ENCODE measurements at regions of chr5 and their contacts with region 1.

Region 1: GRCh38 chr5:38494763-38495162 is 61.7 kb downstream of the LIFR start:
- DNase-seq: no peak
- H3K4me3 ChIP-seq: no peak overlapping the region
- H3K27ac ChIP-seq: no peak overlapping the region
- H3K4me1 ChIP-seq: no peaks in the 10 kb centered on the region
- H3K27me3 ChIP-seq: no peaks in the 10 kb centered on the region
- CTCF ChIP-seq: no peak

Region 2: GRCh38 chr5:38441453-38442246 is 53.1 kb before region 1 on chr5:
- CTCF ChIA-PET with region 1: no interaction called
- dilution Hi-C with region 1: no loop called
- in situ Hi-C with region 1: no loop called
- intact Hi-C with region 1: no loop called
- DNase-seq: peak; percentile 73
- H3K4me3 ChIP-seq: no peak overlapping the region
- H3K27ac ChIP-seq: no peak overlapping the region
- H3K4me1 ChIP-seq: no peaks in the 10 kb centered on the region
- H3K27me3 ChIP-seq: no peaks in the 10 kb centered on the region
- CTCF ChIP-seq: peak; percentile 98

Region 3: DNA sequence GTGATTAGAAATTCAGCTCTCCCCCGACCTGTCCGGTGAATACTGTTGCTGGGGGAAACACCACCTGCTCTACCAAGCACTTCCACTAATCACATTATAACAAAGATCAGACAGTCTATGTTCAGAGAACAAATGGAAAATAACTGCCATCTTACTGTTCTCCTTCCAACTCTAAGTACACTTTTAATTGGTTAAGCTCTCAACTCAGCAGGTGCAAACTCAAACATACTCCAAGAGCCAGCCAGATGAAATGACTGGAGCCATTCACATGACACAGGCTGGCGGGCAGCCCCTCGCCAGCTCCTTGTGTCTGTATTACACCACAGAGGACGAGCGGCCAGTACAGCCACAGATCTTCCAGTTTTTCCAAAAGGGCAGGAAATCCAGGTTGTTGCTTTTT is 45.6 kb after region 1 on chr5:
- CTCF ChIA-PET with region 1: no interaction called
- dilution Hi-C with region 1: loop called (anchors 5 kb)
- in situ Hi-C with region 1: no loop called
- intact Hi-C with region 1: no loop called
- DNase-seq: no peak
- H3K4me3 ChIP-seq: no peak overlapping the region
- H3K27ac ChIP-seq: no peak overlapping the region
- H3K4me1 ChIP-seq: peaks cover 7% of the 10 kb centered on the region
- H3K27me3 ChIP-seq: no peaks in the 10 kb centered on the region
- CTCF ChIP-seq: no peak

Measured in mammary epithelial cell (primary cell).